Activated naive CD4-positive, alpha-beta T cell treated with anti-CD3 and anti-CD28 coated beads for 36 hours (primary cell): ENCODE measurements at regions of chr5 and their contacts with region 1.

Region 1: GRCh38 chr5:56328753-56329560 is 95.8 kb upstream of the ANKRD55 start:
- DNase-seq: peak; percentile 76
- H3K4me3 Mint-ChIP-seq: peak overlapping the region; percentile 23
- H3K27ac Mint-ChIP-seq: peak overlapping the region; percentile 91
- H3K4me1 Mint-ChIP-seq: peaks cover 50% of the 10 kb centered on the region
- H3K27me3 Mint-ChIP-seq: no peaks in the 10 kb centered on the region

Region 2: GRCh38 chr5:55037046-55037771 is 1291.7 kb before region 1 on chr5:
- CTCF ChIA-PET with region 1: no interaction called
- intact Hi-C with region 1: loop called (anchors 2 kb)
- DNase-seq: peak; percentile 92
- H3K4me3 Mint-ChIP-seq: no peak overlapping the region
- H3K27ac Mint-ChIP-seq: peak overlapping the region; percentile 83
- H3K4me1 Mint-ChIP-seq: peaks cover 20% of the 10 kb centered on the region
- H3K27me3 Mint-ChIP-seq: no peaks in the 10 kb centered on the region

Region 3: DNA sequence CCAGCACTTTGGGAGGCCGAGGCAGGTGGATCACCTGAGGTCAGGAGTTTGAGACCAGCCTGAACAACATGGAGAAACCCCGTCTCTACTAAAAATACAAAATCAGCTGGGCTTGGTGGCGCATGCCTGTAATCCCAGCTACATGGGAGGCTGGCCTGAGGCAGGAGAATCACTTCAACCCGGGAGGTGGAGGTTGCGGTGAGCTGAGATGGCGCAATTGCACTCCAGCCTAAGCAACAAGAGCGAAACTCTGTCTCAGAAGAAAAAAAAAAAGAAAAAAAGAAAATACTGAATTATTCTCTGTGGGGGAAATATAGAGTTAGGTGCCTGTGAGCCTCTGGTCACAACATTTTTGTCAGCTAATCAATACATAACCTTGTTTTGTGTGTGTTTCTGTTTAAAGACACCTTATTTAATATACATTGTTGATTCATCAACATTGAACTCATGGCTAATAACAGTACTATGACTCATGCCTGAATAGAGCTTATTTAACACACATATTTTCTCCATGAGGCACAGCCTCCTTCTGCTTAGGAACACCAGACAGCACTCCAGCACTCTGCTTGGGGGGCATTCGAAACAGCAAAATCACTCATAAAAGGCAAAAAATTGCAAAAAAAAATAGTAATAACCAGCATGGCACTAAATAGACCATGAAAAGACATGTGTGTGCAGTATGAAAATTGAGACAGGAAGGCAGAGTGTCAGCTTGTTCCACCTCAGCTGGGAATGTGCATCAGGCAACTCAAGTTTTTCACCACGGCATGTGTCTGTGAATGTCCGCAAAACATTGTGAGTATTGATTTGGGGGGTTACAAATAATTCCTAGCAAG is 477.9 kb before region 1 on chr5 and contains the start of gene IL31RA:
- CTCF ChIA-PET with region 1: no interaction called
- intact Hi-C with region 1: loop called (anchors 5 kb)
- DNase-seq: no peak
- H3K4me3 Mint-ChIP-seq: no peak within 1 kb of the TSS
- H3K27ac Mint-ChIP-seq: no peak within 1 kb of the TSS
- H3K4me1 Mint-ChIP-seq: peaks cover 34% of the 10 kb centered on the region
- H3K27me3 Mint-ChIP-seq: no peaks in the 10 kb centered on the region
- total RNA-seq, gene IL31RA: 0.31 to 0.32 TPM

Region 4: DNA sequence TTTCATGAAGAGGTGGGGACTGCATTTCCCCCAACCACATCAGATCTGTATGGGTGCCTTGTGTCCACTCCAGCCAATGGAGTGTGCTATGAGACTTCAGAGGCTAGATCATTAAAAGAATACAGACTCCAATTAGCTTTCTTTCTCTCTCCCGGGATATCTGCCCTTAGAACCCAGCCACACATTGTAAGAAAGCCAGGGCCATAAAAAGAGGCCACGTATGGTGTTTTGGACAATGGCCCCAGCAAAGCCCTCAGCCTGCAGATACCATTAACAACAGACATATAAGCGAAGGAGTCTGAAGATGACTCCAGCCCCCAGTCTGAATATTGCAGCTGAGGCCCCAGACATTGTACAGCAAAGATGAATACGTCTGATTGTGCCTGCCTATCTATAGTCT is 355.7 kb before region 1 on chr5:
- CTCF ChIA-PET with region 1: no interaction called
- intact Hi-C with region 1: no loop called
- DNase-seq: no peak
- H3K4me3 Mint-ChIP-seq: no peak overlapping the region
- H3K27ac Mint-ChIP-seq: peak overlapping the region; percentile 13
- H3K4me1 Mint-ChIP-seq: peaks cover 77% of the 10 kb centered on the region
- H3K27me3 Mint-ChIP-seq: no peaks in the 10 kb centered on the region

Region 5: GRCh38 chr5:56026863-56027300 is 302.1 kb before region 1 on chr5:
- CTCF ChIA-PET with region 1: no interaction called
- intact Hi-C with region 1: loop called (anchors 2 kb)
- DNase-seq: peak; percentile 42
- H3K4me3 Mint-ChIP-seq: no peak overlapping the region
- H3K27ac Mint-ChIP-seq: no peak overlapping the region
- H3K4me1 Mint-ChIP-seq: peaks cover 30% of the 10 kb centered on the region
- H3K27me3 Mint-ChIP-seq: no peaks in the 10 kb centered on the region

Region 6: DNA sequence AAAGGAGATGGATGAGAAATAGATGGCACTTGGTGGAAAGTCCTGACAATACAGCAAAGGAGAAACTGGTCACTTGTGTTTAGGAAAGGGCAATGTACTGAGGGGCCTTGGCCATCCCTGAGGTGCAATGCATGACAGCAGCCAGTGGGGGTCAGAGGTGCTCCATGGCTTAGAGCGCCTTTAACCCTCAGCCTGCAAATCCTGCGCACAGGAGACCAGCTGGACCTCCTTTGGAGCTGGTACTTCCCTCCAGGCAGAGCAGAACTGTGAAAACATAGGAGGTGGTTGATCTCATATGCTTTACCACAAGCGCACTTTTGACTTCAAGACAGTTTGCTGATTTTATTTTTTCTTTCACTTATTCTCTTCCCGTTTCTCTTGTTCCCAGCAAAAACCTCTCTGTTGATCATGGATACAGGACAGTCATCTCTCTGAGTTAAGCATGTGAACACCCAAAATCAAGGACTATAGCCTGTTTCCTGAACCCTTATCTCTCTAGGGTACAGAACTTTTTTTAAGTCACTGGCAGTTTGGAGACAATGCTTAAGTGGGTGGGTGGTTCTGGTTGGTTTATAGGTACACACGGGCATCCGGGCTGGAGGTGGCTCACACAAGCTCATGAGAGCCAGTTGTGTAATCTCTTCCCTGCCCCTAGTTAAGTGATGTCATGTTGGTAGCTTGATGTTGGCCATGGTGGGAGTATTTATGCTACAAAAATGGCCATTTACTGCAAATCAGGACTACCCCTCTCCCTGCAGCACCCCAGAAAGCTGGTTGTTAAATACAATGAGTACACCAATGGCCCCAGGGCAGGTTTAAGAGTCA is 58.2 kb before region 1 on chr5:
- CTCF ChIA-PET with region 1: interaction called, 20 read pairs
- intact Hi-C with region 1: loop called (anchors 1 kb)
- DNase-seq: peak; percentile 88
- H3K4me3 Mint-ChIP-seq: peak overlapping the region; percentile 17
- H3K27ac Mint-ChIP-seq: peak overlapping the region; percentile 61
- H3K4me1 Mint-ChIP-seq: peaks cover 17% of the 10 kb centered on the region
- H3K27me3 Mint-ChIP-seq: no peaks in the 10 kb centered on the region

Region 7: GRCh38 chr5:56588636-56589480 is 259.9 kb after region 1 on chr5:
- CTCF ChIA-PET with region 1: no interaction called
- intact Hi-C with region 1: loop called (anchors 5 kb)
- DNase-seq: peak; percentile 52
- H3K4me3 Mint-ChIP-seq: no peak overlapping the region
- H3K27ac Mint-ChIP-seq: no peak overlapping the region
- H3K4me1 Mint-ChIP-seq: peaks cover 38% of the 10 kb centered on the region
- H3K27me3 Mint-ChIP-seq: no peaks in the 10 kb centered on the region

Region 8: DNA sequence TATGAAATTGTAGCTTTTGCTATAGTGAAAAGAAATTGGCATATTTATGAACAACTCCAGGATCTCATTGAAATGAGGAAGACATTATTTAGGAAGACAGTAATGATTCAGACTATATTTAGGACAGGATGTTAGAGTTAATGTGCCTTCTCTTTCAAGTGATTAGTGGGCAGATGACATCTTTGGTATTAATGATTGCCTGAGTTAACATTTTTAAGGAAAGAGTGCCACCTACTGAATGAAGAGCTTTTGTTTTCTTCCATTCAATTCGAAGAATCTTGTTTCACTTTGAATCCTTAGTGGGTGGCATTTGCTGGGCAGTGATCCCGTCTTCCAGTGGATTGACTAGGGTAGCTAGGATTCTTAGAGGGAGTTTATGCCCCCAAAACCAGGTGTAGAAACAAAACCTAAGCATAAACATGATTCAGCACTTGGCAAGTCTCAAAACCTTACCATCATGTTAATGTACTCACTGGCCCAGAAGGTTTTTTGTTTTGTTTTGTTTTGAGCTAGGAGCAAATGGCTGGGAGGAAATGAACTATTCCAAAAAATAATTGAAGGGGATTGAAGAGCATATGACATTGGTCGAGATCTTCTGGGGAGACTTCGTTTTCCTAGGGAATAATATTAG is 509.6 kb after region 1 on chr5:
- CTCF ChIA-PET with region 1: interaction called, 15 read pairs
- intact Hi-C with region 1: no loop called
- DNase-seq: no peak
- H3K4me3 Mint-ChIP-seq: peak overlapping the region; percentile 47
- H3K27ac Mint-ChIP-seq: peak overlapping the region; percentile 74
- H3K4me1 Mint-ChIP-seq: peaks cover 75% of the 10 kb centered on the region
- H3K27me3 Mint-ChIP-seq: no peaks in the 10 kb centered on the region

Region 9: DNA sequence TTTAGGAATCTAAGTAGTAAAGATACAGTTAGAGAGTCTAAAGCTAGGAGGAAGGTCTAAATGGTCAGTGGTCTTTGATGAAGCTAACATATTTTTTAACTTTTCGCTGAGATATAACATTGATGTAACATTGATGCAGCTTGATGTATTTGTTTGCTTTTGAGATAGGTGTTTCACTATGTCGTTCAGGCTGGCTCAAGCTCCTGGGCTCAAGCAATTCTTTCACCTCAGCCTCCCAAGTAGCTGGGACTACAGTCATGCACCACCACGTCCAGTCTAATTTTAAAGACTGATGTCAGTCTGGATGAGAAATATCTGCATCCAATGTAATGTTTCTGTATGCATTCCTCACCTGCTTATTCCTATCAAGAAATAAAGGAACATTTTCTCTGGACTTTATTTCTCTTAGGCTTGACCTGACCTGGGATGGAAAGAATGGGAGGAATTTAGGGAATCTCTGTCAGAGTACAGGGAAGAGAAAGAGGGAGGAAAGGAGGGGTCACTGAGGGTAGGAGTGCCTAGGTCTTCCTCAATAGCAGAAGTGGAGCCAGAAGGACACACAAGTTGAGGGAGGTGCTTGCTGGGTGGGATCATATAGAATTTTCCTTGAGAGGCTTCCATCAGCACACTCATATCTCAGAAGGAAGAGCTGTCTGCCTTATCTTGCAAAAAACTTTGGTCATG is 743.4 kb after region 1 on chr5:
- CTCF ChIA-PET with region 1: no interaction called
- intact Hi-C with region 1: no loop called
- DNase-seq: no peak
- H3K4me3 Mint-ChIP-seq: no peak overlapping the region
- H3K27ac Mint-ChIP-seq: no peak overlapping the region
- H3K4me1 Mint-ChIP-seq: no peaks in the 10 kb centered on the region
- H3K27me3 Mint-ChIP-seq: peaks cover 5% of the 10 kb centered on the region